ENCODE measurements at regions of chr6 and their contacts with region 1.

Region 1: DNA sequence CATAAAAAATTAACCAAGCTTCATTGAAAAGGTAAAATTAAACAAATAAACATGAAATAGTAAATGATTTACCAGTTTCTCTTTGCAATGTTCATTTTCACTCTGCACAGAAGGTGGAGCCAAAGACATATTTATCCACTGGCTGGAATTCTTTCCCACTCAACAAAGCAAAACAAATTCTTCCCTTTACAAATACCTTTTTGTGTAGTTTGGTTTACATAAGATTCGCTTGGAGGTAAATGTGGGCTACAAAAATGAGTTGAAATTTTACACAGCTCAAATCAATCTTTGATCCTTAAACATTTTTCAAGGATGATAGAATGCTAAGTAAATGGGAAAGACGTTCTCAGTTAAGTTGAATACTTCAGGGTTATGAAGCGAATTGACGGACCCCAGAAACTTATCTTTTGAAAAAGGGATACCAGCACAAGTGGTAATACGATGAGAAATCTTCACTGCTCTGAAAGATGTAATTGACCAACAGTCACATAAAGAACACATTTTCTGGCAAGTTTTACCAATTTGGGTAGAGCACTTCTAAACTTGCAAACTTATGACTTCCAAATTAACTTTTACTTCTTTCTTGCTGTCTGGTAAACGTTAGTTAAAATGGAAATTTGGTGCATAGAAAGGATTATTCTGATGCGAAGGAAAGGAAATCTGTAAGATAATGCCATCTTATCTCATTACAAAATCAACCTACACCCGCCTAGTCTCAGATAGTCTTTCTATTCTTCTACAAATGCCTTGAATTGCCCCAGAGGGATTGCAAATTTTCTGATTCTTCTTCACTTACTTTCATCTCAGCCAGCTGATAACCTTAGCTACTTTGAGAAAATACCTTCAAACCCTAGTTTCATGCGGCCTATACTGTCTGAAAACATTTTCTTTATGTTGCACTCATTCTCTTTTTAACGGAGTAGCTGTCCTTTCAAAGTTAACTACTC is 4.7 kb upstream of the GJA1 start:
- DNase-seq: peak; percentile 69
- H3K4me3 ChIP-seq: no peak overlapping the region
- H3K27ac ChIP-seq: no peak overlapping the region
- H3K4me1 ChIP-seq: peaks cover 30% of the 10 kb centered on the region
- H3K27me3 ChIP-seq: no peaks in the 10 kb centered on the region
- CTCF ChIP-seq: peak; percentile 87

Region 2: DNA sequence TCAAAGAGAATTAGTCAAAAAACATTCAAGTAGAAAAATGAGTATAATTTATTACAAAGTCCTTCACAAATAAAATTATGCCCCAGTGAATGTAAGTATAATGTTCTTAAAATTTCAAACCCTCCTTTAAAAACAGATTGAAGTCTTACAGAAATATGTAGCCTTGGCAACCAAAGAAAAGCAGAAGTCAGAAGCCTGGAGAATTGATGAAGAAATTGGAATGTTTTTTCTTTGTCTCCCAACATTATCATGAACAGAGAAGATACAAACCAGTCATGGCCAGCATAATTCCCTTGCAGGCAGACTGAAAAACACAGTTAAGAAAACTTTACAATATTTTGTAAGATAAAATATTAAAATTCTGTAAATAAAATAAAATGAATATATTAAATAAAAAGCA is 318.4 kb before region 1 on chr6:
- CTCF ChIA-PET with region 1: no interaction called
- POLR2A ChIA-PET with region 1: no interaction called
- intact Hi-C with region 1: no loop called
- DNase-seq: no peak
- H3K4me3 ChIP-seq: no peak overlapping the region
- H3K27ac ChIP-seq: no peak overlapping the region
- H3K4me1 ChIP-seq: no peaks in the 10 kb centered on the region
- H3K27me3 ChIP-seq: no peaks in the 10 kb centered on the region
- CTCF ChIP-seq: no peak

Region 3: DNA sequence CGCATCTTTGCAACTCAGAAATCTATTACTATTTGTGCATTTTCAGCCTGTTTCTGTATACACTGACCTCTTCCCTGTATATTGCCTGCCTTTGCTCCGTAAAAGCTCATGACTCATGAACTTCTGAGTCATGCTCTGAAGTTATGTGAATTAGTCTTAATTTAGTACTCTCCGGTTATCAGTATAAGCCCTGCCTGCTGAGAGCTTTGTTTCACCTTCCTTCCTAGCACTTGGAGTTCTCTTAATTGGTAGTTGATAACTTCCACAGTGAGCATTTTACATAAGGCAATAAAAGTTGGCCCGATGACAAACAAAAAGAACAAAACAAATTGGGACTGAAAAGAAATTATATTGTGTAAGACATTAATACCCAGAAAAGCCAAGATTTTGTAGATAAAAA is 236.0 kb after region 1 on chr6:
- CTCF ChIA-PET with region 1: no interaction called
- POLR2A ChIA-PET with region 1: no interaction called
- intact Hi-C with region 1: loop called (anchors 10 kb)
- DNase-seq: peak; percentile 90
- H3K4me3 ChIP-seq: no peak overlapping the region
- H3K27ac ChIP-seq: peak overlapping the region; percentile 8
- H3K4me1 ChIP-seq: peaks cover 8% of the 10 kb centered on the region
- H3K27me3 ChIP-seq: no peaks in the 10 kb centered on the region
- CTCF ChIP-seq: no peak

Region 4: DNA sequence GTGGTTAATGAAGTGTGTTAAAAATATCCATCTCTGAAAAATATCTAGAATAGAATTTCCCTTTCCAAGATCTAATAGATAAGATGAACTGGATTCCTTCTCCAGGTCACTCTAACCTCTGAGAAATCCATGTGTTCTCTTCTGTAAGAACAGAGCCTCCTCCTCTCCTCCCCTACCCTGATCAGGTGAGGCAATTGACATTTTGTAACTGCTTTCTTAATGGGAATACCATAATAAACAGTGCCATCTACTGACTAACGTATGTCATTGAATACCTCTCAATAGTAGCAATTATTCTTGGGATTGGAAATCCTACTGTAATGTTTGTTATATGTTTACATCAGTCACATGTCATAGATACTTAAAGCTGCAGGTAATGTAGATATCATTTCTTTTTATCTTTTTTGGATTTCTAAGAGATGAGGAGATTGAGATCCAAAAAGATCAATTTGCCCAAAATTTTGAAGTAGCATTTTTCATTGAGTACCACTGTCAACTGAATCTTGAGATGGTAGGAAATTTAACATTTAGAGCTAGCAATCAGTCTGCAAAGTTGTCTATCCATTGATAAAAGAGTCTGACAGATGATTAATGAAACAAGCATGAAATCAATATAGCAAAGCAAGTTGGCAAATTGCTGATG is 602.9 kb after region 1 on chr6:
- CTCF ChIA-PET with region 1: no interaction called
- POLR2A ChIA-PET with region 1: no interaction called
- intact Hi-C with region 1: loop called (anchors 1 kb)
- DNase-seq: peak; percentile 80
- H3K4me3 ChIP-seq: no peak overlapping the region
- H3K27ac ChIP-seq: no peak overlapping the region
- H3K4me1 ChIP-seq: no peaks in the 10 kb centered on the region
- H3K27me3 ChIP-seq: no peaks in the 10 kb centered on the region
- CTCF ChIP-seq: peak; percentile 72

Region 5: DNA sequence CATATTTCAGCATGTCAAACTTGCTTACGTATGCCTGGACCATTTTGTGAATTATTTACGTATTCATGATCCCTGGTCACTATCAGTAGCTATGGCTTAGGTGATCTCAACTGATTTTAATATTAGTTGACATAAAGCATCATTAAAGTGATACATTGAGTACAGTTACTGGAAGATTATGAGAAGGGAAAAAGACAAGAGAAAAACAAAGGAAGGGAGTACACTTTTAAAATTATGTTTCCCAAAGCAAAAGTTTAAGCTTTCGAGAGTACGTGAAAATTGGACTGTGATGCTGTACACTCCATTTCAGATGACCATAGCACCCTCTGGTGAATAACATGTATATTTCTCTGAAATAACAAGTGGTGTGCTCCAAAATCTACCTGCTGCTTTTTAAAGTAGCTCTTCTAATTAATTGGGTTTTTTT is 753.6 kb after region 1 on chr6:
- CTCF ChIA-PET with region 1: no interaction called
- POLR2A ChIA-PET with region 1: no interaction called
- intact Hi-C with region 1: loop called (anchors 1 kb)
- DNase-seq: peak; percentile 27
- H3K4me3 ChIP-seq: peak overlapping the region; percentile 16
- H3K27ac ChIP-seq: no peak overlapping the region
- H3K4me1 ChIP-seq: no peaks in the 10 kb centered on the region
- H3K27me3 ChIP-seq: no peaks in the 10 kb centered on the region
- CTCF ChIP-seq: peak; percentile 66

Region 6: DNA sequence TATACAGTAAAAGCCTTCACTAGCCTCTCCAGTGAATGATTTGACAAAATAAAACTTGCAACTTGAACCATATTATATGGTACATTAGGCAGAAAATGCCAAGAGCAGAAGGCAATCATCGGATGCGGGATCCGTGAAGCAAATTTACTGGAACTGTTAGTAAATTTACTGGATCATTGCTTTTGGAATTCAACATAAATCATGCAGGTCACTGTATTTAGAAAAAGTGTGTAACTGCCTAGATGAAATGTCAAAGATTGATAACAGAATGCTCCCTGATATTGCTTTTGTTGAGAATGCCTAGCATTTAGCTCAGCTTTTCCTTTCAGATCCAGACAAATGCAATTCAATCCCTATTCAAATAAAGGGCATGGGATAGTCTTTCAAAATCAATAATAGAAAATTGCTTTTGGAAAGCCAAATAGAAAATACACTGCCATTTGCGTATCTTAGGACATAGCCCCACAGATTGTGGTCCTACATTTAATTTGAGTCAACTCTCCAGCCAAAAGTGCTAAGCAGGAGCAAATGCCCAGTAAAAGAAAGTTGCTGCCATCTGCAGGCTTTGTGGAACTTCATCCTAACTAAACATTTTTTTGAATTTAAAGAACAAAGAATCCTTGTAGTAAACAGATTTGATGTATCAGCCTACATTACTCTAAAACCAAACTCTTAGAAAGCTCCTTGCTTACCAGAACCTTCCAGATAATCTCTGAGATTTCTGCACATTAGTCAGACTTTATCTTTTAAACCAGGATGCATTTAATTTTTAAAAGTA is 859.2 kb after region 1 on chr6:
- CTCF ChIA-PET with region 1: no interaction called
- POLR2A ChIA-PET with region 1: no interaction called
- intact Hi-C with region 1: loop called (anchors 5 kb)
- DNase-seq: peak; percentile 51
- H3K4me3 ChIP-seq: no peak overlapping the region
- H3K27ac ChIP-seq: no peak overlapping the region
- H3K4me1 ChIP-seq: peaks cover 24% of the 10 kb centered on the region
- H3K27me3 ChIP-seq: no peaks in the 10 kb centered on the region
- CTCF ChIP-seq: peak; percentile 56

Region 7: DNA sequence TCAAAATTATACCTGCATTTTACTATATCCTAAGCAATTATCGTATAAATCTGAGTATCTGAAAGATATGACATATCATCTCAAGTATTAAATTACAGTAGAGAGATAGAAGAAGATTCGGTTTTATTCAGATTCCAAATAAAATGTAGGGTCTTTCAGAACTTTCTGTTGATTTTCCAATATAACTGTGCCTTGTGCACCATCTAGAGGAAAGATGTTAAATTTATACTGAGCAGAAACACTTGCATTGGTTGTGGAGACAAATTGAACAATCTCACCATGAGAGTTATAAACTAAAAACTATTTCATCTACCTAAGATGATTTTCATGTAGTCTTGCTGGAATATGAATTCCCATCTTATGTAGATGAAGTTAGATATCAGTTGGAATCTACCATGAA is 941.9 kb after region 1 on chr6:
- CTCF ChIA-PET with region 1: no interaction called
- POLR2A ChIA-PET with region 1: no interaction called
- intact Hi-C with region 1: loop called (anchors 5 kb)
- DNase-seq: peak; percentile 52
- H3K4me3 ChIP-seq: no peak overlapping the region
- H3K27ac ChIP-seq: no peak overlapping the region
- H3K4me1 ChIP-seq: no peaks in the 10 kb centered on the region
- H3K27me3 ChIP-seq: no peaks in the 10 kb centered on the region
- CTCF ChIP-seq: peak; percentile 62

Region 8: GRCh38 chr6:122530440-122531046 is 1099.8 kb after region 1 on chr6:
- CTCF ChIA-PET with region 1: no interaction called
- POLR2A ChIA-PET with region 1: no interaction called
- intact Hi-C with region 1: loop called (anchors 10 kb)
- DNase-seq: peak; percentile 81
- H3K4me3 ChIP-seq: no peak overlapping the region
- H3K27ac ChIP-seq: no peak overlapping the region
- H3K4me1 ChIP-seq: no peaks in the 10 kb centered on the region
- H3K27me3 ChIP-seq: no peaks in the 10 kb centered on the region
- CTCF ChIP-seq: peak; percentile 86

Measured in A673 (cell line).